ENCODE measurements at regions of chr2 and their contacts with region 1.

Region 1: DNA sequence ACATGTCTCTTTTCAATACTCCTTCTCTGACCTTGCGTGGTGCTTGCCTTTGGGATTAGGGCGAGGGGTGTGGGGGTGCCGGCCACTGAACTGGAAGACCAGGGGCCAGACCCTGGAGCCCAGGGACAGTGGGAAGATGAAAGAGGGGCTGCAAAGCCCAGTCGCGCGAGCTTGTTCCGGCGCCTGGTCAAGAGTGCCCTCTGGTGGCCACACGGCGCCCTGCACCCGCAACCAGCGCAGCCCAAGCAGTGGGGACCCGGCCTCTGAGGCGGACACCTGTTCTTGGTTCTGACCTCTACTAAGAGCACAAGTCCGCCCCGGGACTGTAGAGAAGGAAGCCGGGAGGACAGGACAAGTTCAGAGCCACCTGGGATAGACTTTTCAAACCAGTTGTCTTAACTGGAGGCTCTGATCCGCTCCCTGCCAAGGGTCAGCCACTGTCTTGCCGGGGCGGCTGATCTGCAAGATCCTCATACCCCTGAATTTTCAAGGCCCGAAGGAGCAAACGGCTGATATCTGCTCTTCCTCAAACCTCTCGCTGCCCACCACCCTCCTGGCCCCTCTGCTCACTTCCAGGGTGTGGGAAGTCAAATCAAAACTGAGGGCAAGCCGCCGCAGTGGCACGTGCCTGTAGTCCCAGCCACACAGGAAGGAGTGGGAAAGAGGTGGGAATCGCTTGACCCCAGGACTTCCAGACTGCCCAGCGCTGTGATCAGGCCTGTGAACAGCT is 14.9 kb upstream of the MSH6 start:
- DNase-seq: peak; percentile 54
- H3K4me3 Mint-ChIP-seq: no peak overlapping the region
- H3K27ac Mint-ChIP-seq: no peak overlapping the region
- H3K4me1 Mint-ChIP-seq: peaks cover 2% of the 10 kb centered on the region
- H3K27me3 Mint-ChIP-seq: peaks cover 5% of the 10 kb centered on the region

Region 2: DNA sequence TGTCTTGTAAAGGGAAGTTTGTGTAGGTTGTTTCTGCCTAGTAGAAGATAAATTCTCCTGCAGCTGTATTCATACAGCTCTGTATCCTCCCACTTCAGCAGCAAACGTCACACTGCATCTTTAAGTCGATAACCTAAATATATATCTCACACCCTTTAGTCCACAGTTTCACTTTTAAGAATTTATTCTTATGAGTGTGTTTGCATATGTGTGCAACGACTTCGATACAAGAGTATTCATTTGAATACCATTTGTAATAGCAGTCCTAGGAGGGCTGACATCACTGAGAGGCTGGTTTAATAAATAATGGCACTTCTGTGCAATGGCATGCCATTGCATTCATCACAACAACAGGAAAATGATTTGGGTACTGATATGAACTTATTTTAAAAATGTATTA is 48.9 kb before region 1 on chr2:
- intact Hi-C with region 1: loop called (anchors 10 kb)
- DNase-seq: no peak
- H3K4me3 Mint-ChIP-seq: no peak overlapping the region
- H3K27ac Mint-ChIP-seq: no peak overlapping the region
- H3K4me1 Mint-ChIP-seq: no peaks in the 10 kb centered on the region
- H3K27me3 Mint-ChIP-seq: no peaks in the 10 kb centered on the region